ENCODE measurements at regions of chr9 and their contacts with region 1.

Region 1: DNA sequence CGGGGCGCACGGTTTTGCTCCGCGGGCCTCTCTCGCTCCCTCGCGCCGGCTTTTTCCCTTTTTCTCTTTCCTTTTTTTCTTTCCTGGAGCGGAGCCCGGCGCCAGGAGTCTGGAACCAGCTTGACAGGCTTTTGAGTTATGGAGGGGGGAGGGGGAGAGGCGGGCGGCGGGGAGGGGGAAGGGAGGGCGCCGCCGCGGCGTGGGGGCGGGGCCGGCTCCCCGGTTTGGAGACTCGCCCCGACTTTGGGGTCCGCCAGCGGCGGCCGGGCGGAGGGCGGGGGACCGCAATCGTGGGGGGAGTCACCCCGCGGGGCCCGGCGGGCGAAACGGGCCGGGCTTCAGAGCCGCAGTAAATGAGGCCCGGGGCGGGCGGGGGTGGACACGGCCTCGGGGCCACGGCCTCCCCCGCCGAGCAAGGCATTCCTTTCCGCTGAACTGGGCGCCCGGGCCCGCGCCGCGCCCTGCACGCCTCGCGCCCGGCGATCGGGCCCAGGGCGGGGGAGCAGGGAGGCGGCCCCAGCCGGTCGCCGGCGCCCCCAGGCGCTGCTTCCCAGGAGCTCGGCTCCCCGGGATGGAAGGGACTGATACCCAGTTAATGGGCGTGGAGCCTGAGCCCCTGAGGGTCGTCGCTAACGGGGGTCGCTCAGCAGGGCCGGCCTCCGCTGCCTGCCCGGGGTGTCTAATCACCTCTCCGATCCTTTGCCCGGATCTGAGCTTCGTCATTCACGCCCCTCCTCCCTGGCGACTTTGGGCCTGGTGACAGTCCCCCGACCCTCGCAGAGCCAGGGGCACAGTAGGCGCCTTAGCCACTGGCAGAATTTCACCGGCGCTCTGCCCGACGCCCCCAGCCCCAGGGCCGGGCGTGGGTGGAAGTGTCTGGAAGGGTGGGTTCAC is 138.1 kb downstream of the C9orf50 start:
- DNase-seq: peak; percentile 89

Region 2: DNA sequence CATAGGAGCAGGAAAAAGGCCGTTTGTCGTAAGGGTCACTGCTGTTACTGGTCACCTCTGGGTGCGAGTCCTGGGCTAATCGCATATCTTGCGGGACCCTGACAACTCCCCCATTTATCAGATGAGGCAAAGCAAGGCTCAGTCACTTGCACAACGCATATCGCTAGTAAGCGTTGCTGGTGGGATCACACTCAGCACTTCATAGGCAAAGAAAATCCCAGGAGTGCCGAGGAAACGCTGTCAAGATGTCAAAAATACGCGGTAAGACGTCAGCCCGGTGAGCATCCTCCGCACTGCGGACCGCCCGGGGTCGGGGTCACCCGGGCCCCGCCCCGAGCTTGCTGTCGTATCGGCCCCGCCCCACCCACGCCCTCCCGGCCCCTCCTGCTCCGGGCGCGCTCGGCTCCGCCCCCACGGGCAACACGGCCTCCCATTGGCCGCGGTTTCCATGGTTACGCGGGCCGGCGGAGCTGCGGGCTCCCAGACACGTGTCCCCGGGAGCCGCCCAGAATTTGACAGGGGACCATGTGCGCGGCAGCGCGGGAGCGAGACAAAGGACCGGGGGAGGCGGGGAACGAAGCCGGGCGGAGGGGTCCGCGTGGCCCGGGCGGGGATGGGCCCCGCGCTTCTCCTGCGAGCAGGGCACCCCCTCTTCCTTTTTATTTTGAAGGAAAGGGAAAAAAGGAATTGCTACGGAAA is 224.5 kb before region 1 on chr9:
- intact Hi-C with region 1: loop called (anchors 5 kb)
- DNase-seq: peak; percentile 94

Region 3: GRCh38 chr9:129320575-129321263 is 162.0 kb before region 1 on chr9:
- intact Hi-C with region 1: loop called (anchors 5 kb)
- DNase-seq: peak; percentile 85

Region 4: DNA sequence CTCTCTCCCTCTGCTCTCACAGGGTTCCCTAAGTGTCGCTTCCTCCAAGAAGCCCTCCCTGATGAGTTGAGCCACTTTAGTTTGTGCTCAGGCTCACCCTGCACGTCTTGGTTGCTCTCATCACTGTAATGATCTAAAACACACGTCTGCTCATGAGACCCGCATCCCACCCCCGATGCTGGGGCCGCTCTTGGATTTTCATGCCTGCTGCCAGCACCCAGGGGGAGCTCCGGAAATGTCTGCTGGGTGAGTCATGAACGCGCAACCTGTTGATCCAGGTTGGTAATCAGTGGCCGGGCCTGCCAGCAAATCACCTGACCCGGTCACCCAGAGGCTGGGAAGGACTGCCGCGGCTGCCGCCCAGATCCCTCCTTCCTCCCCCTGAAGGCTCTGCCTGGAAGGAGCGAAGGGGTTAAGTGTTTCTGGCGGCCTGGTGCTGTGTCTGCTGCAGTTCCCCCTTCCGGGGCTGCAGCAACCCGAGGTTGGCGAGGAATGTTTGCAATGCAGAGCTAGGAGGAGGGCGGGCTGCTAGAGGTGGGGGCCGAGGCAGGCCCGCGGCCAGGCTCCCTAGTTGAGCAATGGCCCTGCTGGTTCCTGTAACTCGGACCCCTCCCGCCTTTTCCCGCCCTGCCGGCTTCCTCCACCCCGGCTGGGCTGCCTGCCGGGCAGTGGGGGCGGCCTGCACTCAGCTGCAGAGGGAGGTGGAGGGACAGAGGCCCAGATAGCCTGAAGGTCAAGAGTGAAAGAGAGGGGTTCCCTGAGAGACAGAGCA is 148.6 kb before region 1 on chr9:
- intact Hi-C with region 1: loop called (anchors 2 kb)
- DNase-seq: peak; percentile 96

Region 5: GRCh38 chr9:129347316-129348120 is 135.2 kb before region 1 on chr9:
- intact Hi-C with region 1: no loop called
- DNase-seq: no peak

Region 6: DNA sequence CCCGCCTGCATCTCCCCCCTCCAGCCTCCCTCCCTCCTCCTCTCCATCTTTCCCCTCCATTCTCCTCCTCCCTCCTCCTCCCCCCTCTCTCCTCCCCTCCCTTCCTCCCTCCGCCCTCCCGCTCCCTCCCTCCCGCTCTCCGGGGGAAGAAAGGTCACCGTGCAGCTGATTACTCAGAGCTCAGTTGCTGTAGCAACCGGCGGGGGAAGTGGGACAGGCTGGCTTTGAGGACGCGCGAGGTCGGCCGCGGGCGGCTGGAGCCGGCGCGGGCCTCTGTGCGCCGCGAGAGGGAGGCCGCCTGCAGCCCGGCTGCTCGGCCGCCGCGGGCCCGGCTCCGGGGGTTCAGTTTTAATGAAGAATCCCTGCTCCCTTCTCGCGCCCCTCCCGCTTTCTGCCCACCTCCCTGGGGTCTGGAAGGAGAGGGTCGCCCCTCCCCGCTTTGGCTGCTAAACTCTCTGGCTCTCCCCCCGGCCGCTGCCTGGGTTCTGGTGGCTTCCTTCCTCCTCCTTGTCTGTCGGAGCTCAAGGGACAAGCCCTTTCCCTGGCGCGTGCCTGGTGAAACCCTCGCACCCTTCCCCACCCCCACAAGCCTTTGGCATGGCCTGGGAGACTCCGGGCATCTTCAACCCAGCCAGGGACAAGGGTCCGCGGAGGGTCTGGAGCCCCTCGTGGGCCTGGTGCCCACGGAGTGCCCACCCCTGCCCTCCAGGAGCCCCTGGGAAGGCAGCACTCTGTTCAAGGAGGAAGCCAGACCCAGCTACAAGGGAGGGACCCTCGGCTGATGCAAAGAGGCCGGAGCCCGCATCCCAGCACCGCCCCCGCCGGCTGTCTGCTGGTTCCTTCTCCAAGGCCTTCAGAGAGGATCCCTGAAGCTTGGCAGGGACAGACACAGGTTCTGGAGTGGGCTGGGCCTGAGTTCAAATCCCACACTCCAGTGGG is 22.2 kb before region 1 on chr9:
- intact Hi-C with region 1: loop called (anchors 2 kb)
- DNase-seq: peak; percentile 100

Measured in cardiac septum (tissue), 1 donor.